IMR-90 (cell line): ENCODE measurements at regions of chr15 and their contacts with region 1.

Region 1: GRCh38 chr15:38002883-38003477 is 68.5 kb downstream of the TMCO5A start:
- DNase-seq: peak; percentile 84
- ATAC-seq: peak; percentile 98
- H3K4me3 ChIP-seq: no peak overlapping the region
- H3K27ac ChIP-seq: no peak overlapping the region
- H3K4me1 ChIP-seq: no peaks in the 10 kb centered on the region; the same call in 1 of the 2 replicates
- H3K27me3 ChIP-seq: no peaks in the 10 kb centered on the region
- CTCF ChIP-seq: peak; percentile 92
- POLR2A ChIP-seq: peak; percentile 58; the same call in 1 of the 2 replicates
- RAD21 ChIP-seq: peak; percentile 99

Region 2: DNA sequence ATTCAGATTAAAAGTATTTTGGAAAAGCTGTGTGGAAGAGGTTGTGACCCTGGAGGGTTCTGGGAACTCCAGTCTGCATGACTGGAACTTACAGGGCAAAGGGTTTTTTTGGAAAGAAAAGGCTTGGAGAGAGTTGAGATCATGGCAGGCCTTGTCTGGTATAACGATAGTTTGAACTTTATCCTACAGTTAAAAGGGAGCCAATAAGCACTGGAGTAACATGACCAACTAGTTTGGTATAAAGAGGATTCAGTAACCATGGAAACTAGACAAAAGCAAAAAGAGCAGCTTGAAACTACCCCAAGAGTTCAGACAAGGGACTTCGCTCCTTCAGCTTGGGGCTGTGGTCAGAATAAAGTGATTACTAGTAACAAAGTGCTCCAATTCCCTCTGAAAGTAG is 219.7 kb before region 1 on chr15:
- CTCF ChIA-PET with region 1: no interaction called
- POLR2A ChIA-PET with region 1: no interaction called
- dilution Hi-C with region 1: no loop called
- in situ Hi-C with region 1: no loop called
- intact Hi-C with region 1: no loop called
- DNase-seq: no peak
- ATAC-seq: no peak
- H3K4me3 ChIP-seq: no peak overlapping the region
- H3K27ac ChIP-seq: no peak overlapping the region
- H3K4me1 ChIP-seq: peaks cover 1% of the 10 kb centered on the region; the same call in 1 of the 2 replicates
- H3K27me3 ChIP-seq: no peaks in the 10 kb centered on the region
- CTCF ChIP-seq: no peak
- POLR2A ChIP-seq: no peak
- RAD21 ChIP-seq: no peak

Region 3: DNA sequence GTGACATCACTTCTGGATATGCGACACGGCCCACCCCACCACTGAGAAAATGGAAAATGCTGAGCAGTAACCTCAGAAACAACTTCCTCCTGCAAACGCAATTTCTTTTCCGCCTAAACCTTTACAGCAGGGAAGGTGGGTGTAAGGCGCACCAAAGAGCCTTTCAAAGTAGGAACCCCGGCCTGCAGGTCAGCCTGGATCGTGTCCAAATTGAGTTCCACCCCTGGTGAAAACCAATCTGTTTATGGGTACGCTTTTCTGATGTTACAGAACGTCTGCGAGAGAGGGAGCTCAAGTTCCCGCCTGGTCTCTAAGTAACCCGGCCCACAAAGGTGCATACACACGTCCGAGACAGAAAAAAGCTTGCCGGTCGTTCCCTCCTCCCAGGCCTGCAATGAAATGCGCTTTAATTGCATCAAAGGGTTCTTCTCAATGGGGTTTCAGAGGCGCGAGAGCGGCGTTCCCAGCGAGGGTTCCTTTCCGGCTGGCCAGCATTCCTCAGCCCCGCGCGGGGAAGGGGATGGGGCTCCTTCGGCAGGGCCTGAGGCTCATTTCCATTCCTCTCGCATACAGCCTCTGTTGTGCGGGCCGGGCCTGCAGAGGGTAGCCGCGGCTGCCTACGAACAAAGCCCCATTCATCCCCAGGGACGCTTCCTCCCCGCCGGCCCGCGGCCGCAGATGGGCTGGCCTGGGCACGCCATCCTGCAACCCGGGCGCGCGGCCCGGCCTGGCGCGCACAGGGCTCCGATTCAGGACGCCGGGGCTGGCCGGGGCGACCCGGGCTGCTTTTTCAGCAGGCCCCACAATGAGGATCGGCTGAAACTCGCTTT is 69.6 kb after region 1 on chr15:
- CTCF ChIA-PET with region 1: no interaction called
- POLR2A ChIA-PET with region 1: interaction called, 4 read pairs
- dilution Hi-C with region 1: no loop called
- in situ Hi-C with region 1: no loop called
- intact Hi-C with region 1: loop called (anchors 5 kb)
- DNase-seq: peak; percentile 71
- ATAC-seq: peak; percentile 75
- H3K4me3 ChIP-seq: peak overlapping the region; percentile 28
- H3K27ac ChIP-seq: peak overlapping the region; percentile 85
- H3K4me1 ChIP-seq: peaks cover 9% of the 10 kb centered on the region
- H3K27me3 ChIP-seq: no peaks in the 10 kb centered on the region
- CTCF ChIP-seq: peak; percentile 25; the same call in 1 of the 2 replicates
- POLR2A ChIP-seq: no peak
- RAD21 ChIP-seq: peak; percentile 17; the same call in 1 of the 2 replicates

Region 4: GRCh38 chr15:38354315-38354929 is 351.4 kb after region 1 on chr15:
- CTCF ChIA-PET with region 1: interaction called, 6 read pairs
- POLR2A ChIA-PET with region 1: no interaction called
- dilution Hi-C with region 1: no loop called
- in situ Hi-C with region 1: loop called (anchors 5 kb)
- intact Hi-C with region 1: loop called (anchors 1 kb)
- DNase-seq: peak; percentile 75
- ATAC-seq: peak; percentile 72
- H3K4me3 ChIP-seq: no peak overlapping the region
- H3K27ac ChIP-seq: no peak overlapping the region
- H3K4me1 ChIP-seq: peaks cover 7% of the 10 kb centered on the region; the same call in 1 of the 2 replicates
- H3K27me3 ChIP-seq: no peaks in the 10 kb centered on the region
- CTCF ChIP-seq: peak; percentile 80
- POLR2A ChIP-seq: no peak
- RAD21 ChIP-seq: peak; percentile 85

Region 5: DNA sequence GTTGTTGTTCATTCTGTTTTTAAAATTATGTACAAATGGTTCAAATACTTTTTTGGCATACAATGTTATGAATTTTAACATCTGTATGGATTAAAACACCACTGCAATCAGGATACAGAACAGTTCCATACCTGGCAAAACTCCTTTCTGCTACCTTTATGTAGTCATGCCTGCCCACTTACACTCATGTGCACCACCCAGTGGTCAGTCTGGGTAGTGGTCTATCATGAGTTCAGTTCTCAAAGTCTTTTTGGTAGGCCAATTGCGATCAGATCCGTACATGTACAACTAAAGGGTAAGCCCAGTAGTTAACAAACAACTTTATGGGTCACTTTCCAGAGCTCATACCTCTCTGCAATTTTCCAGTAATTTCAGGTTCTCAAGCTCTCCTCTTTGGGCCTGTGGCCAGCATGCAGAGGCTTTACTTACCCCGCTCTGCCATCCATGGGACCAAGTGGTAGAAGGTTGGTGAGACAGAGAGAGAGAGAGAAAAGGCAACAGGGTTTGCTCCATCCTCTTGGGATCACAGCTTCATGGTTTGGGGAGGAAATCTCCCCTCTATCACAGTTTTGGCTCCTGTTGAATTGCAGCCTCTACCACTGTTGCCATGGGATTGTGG is 387.1 kb after region 1 on chr15:
- CTCF ChIA-PET with region 1: interaction called, 3 read pairs
- POLR2A ChIA-PET with region 1: no interaction called
- dilution Hi-C with region 1: no loop called
- in situ Hi-C with region 1: no loop called
- intact Hi-C with region 1: loop called (anchors 2 kb)
- DNase-seq: peak; percentile 58
- ATAC-seq: peak; percentile 87
- H3K4me3 ChIP-seq: no peak overlapping the region
- H3K27ac ChIP-seq: no peak overlapping the region
- H3K4me1 ChIP-seq: no peaks in the 10 kb centered on the region
- H3K27me3 ChIP-seq: no peaks in the 10 kb centered on the region
- CTCF ChIP-seq: peak; percentile 71
- POLR2A ChIP-seq: no peak
- RAD21 ChIP-seq: peak; percentile 64

Region 6: GRCh38 chr15:38398134-38398533 is 395.2 kb after region 1 on chr15:
- CTCF ChIA-PET with region 1: no interaction called
- POLR2A ChIA-PET with region 1: interaction called, 10 read pairs
- dilution Hi-C with region 1: no loop called
- in situ Hi-C with region 1: no loop called
- intact Hi-C with region 1: no loop called
- DNase-seq: peak; percentile 99
- ATAC-seq: peak; percentile 98
- H3K4me3 ChIP-seq: no peak overlapping the region
- H3K27ac ChIP-seq: no peak overlapping the region
- H3K4me1 ChIP-seq: peaks cover 8% of the 10 kb centered on the region; the same call in 1 of the 2 replicates
- H3K27me3 ChIP-seq: no peaks in the 10 kb centered on the region
- CTCF ChIP-seq: no peak
- POLR2A ChIP-seq: no peak
- RAD21 ChIP-seq: no peak

Region 7: DNA sequence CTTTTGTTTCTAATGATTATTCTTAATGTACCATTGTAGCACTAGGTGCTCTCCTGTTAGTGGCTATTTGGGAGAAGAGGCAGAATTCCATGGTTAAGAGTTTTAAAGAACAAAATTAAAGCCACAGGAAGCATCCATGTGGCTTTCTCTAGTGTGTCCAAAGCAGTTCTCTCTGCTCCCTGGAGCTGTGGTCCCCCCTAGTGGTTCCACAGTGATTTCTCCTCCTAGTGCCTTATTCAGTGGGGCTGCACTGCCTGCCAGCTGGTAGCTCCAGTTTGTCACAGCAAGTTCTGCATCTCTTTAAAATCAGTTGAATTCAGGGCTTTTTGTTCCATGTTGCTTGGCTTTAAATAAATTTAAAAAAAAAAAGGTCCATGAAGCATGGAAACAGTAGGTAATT is 411.4 kb after region 1 on chr15:
- CTCF ChIA-PET with region 1: interaction called, 6 read pairs
- POLR2A ChIA-PET with region 1: interaction called, 6 read pairs
- dilution Hi-C with region 1: no loop called
- in situ Hi-C with region 1: loop called (anchors 10 kb)
- intact Hi-C with region 1: loop called (anchors 1 kb)
- DNase-seq: peak; percentile 75
- ATAC-seq: peak; percentile 100
- H3K4me3 ChIP-seq: no peak overlapping the region
- H3K27ac ChIP-seq: no peak overlapping the region
- H3K4me1 ChIP-seq: no peaks in the 10 kb centered on the region
- H3K27me3 ChIP-seq: peaks cover 32% of the 10 kb centered on the region
- CTCF ChIP-seq: peak; percentile 86
- POLR2A ChIP-seq: 0 out of 2 replicates have a peak, but pooled peaks have one; percentile 41
- RAD21 ChIP-seq: peak; percentile 95

Region 8: DNA sequence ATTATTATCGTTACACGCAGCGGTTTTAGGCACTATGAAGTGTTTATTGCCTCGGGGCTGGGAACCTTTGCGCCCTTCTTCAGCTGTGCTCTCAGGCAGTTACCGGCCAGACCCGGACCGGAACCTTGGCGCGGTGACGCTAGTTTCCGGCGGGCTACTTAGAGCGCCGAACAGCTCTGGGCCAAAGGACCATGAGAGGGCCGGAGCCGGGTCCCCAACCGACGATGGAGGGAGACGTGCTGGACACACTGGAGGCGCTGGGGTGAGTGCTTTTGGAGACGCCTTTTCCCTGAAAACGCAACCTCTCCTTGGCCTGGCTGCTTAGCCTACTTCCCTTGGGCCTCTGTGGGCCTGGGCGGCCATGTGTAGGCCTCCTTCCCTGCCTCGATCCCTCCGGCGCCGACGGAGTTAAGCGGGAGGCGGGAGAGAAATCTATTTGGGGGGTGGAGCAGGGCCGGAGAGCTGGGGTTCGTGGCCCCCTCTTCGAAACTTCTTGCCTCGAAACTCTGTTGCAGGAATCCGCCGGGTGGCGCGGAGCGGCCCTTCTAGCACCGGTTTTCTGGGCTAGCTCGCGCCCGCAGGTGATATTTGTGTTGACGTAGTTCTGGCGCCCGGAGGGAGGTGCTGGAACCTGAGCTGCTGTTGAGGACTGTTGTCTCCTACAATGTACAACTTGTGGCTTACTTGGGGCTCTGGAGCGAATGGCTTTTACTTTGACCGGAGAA is 451.2 kb after region 1 on chr15 and contains the start of gene FAM98B:
- CTCF ChIA-PET with region 1: no interaction called
- POLR2A ChIA-PET with region 1: no interaction called
- dilution Hi-C with region 1: no loop called
- in situ Hi-C with region 1: no loop called
- intact Hi-C with region 1: no loop called
- DNase-seq: peak; percentile 85
- ATAC-seq: peak; percentile 97
- H3K4me3 ChIP-seq: peak within 1 kb of the TSS; percentile 87
- H3K27ac ChIP-seq: peak within 1 kb of the TSS; percentile 98
- H3K4me1 ChIP-seq: peaks cover 3% of the 10 kb centered on the region; the same call in 1 of the 2 replicates
- H3K27me3 ChIP-seq: peaks cover 6% of the 10 kb centered on the region; the same call in 1 of the 2 replicates
- CTCF ChIP-seq: 0 out of 2 replicates have a peak, but pooled peaks have one; percentile 2
- POLR2A ChIP-seq: peak; percentile 67; the same call in 1 of the 2 replicates
- RAD21 ChIP-seq: no peak
- total RNA-seq, gene FAM98B: 2.7 and 7.2 TPM in 2 replicates